ENCODE measurements at regions of chr4 and their contacts with region 1.

Region 1: DNA sequence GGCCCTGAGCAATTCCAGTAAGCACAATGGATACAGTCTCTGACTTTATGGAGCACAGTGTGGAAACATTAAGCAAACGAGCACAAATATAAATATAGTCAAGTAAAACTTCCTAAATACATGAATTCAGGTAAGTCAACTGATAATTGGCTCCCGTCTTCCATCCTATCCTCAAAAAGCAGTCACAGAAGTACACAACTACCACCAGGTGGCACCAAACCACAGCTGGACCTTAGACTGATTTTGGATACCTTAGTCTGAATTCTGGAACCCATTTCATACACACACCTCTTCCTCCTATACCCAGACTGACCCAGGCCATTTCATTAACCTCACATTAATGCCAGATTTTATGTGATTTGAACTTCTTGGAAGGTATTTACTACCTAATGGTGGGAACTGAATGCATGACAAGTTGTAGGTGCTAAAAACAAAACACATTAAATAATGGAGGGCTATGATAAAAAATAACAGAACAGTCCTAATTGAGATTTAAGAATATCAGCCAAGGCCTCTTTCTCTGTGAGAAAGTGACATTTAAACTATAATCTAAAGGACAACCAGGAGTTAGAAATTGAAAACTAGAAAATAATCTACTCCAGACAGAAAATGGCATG is 77.5 kb downstream of the ELF2 start:
- DNase-seq: peak; percentile 81
- ATAC-seq: peak; percentile 70
- H3K4me3 Mint-ChIP-seq: no peak overlapping the region
- H3K27ac Mint-ChIP-seq: no peak overlapping the region
- H3K4me1 Mint-ChIP-seq: no peaks in the 10 kb centered on the region
- H3K27me3 Mint-ChIP-seq: no peaks in the 10 kb centered on the region
- CTCF ChIP-seq: peak; percentile 86

Region 2: DNA sequence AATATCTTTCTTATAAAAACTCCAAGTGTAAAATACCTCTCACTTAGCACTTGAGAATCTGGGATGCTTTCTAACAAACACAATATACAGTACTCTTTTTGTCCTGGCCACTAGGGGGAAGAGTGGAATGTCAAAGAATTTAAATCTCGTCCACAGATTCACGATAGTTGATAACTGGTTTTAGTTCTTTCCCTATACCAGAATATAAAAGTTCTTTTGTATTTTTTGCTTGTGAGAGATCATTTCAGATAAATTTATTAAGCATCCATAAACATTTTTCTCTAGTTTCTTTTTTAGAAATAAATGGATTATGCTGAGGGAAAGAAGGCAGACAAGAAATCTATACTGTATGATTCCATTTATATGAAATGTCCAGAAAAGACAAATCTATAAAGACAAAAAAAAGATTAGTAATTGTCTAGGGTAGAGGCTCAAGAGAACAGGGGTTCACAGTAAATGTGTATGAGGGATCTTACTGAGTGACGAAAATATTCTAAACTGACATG is 130.1 kb after region 1 on chr4:
- CTCF ChIA-PET with region 1: interaction called, 16 read pairs
- POLR2A ChIA-PET with region 1: no interaction called
- intact Hi-C with region 1: no loop called
- DNase-seq: no peak
- ATAC-seq: no peak
- H3K4me3 Mint-ChIP-seq: no peak overlapping the region
- H3K27ac Mint-ChIP-seq: no peak overlapping the region
- H3K4me1 Mint-ChIP-seq: no peaks in the 10 kb centered on the region
- H3K27me3 Mint-ChIP-seq: no peaks in the 10 kb centered on the region
- CTCF ChIP-seq: peak; percentile 70